GM23248 (cell line): ENCODE measurements at regions of chr18 and their contacts with region 1.

Region 1: DNA sequence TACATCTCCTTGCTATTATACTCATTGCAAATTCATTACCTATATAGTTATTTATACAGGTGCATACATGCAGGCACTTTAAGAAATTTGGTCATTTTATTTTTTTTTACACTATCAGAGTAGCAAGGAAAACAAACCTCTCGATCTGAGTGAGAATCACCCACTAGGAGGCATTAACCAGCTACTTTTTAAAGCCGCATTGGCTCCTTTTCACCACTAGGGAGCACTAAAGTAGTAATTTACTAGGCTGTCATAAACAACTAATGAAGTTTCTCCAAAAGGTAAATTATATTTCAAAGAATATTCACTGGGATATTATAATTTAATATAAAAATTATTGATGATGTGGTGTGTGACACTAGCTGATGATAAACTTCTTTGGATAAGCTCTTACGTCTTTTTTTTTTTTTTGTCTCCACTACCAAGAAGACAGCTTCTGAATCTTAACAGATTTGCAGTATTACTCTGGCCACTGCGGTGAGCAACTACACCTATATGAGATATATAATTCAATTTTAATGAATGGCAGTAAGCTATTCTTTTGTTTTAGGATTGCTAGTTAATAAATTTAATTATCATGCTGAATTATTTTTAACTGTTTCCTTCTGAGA is 101.9 kb downstream of the NOL4 start:
- DNase-seq: peak; percentile 76
- H3K4me3 ChIP-seq: no peak overlapping the region
- H3K27ac ChIP-seq: no peak overlapping the region
- H3K4me1 ChIP-seq: no peaks in the 10 kb centered on the region
- H3K27me3 ChIP-seq: no peaks in the 10 kb centered on the region

Region 2: DNA sequence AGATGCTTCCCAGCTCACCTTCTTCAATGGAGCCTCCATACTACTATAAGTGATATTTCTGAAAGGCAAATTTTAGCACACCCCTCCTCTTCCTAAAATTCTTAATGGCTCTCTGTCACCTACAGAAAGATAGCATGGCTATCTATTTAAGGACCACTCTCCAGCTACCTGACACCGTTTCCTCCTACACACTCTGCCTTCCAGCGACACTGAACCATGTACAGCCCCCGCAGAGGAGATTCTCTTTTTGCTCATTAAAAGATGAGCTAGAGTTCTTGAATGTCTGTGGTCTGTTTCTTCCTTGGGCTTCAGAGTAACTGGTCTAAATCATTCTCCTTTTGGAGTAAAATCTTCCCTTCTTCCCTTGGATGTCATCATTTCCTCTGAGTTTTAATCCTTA is 1613.7 kb before region 1 on chr18:
- in situ Hi-C with region 1: no loop called
- DNase-seq: no peak
- H3K4me3 ChIP-seq: no peak overlapping the region
- H3K27ac ChIP-seq: no peak overlapping the region
- H3K4me1 ChIP-seq: no peaks in the 10 kb centered on the region
- H3K27me3 ChIP-seq: no peaks in the 10 kb centered on the region

Region 3: DNA sequence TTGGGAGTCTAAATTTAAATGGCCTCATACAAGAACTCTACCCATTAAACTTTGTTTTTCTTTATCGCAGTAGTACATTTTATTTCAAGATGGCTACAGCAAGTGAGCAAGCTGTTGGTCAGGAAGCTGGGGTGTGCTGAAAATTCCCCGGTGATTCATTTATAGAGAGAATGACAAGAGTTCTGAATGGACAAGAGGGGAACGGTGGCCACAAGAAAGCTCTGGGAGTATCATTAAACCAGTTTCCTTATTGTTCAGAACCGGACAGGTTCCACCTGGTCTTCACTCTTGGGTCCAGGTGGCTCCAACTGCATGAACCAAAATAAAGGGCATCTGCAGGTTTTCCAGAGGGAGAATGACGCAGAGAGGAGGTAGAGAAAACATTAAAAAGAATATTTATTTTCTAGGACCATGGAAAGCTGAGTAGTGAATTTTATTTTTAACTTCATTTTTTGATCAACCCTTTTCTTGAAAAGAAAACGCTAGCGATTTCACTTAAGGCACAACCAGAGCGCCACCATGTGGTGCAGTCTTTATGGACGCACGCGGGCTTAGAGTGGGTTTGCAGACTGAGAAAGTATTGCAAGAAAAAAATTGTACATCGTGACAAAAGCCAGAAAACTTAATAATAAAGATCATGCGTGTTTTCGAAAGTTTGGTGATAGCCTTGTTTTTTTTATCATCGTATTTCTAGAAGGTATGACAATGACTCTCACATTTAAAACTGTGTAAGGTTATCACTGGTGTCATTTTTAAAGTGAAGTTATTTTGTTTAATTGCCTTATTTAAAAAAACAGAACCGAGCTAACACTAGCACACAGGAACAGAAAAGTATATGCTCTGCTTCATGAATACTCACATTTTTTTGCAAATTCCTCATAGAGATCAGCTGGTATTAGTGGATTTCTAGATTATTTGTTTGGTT is 199.8 kb after region 1 on chr18:
- in situ Hi-C with region 1: loop called (anchors 10 kb)
- DNase-seq: peak; percentile 81
- H3K4me3 ChIP-seq: no peak overlapping the region
- H3K27ac ChIP-seq: no peak overlapping the region
- H3K4me1 ChIP-seq: no peaks in the 10 kb centered on the region
- H3K27me3 ChIP-seq: no peaks in the 10 kb centered on the region

Region 4: GRCh38 chr18:34767601-34768027 is 644.8 kb after region 1 on chr18:
- in situ Hi-C with region 1: no loop called
- DNase-seq: peak; percentile 94
- H3K4me3 ChIP-seq: no peak overlapping the region
- H3K27ac ChIP-seq: peak overlapping the region; percentile 95
- H3K4me1 ChIP-seq: peaks cover 40% of the 10 kb centered on the region
- H3K27me3 ChIP-seq: no peaks in the 10 kb centered on the region

Region 5: DNA sequence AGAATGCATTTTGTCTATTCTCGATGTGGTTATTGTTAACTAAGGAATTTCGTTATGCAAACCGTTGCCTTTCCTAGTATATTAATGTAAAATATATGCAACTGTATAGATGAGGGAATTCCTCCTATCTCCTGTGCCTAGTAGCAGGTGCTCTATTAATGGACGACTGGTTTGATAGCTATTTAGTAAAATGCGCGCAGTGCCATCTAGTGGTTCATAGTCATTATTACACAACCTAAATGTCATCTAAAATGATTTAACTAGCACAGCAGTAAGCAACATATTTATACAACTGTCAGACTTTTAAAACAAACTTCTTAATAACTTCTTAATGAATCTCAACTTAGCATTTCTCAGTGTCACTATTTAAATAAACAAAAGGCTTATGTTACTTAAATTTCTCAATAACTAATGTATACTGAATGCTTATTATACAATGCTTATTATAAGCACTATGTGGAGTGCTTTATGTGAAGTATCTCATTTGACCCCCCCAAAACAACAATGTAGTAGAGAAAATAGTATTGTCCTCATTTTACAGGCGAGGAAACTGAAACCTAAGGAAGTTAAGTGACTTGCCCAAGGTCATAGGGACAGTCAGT is 665.2 kb after region 1 on chr18:
- in situ Hi-C with region 1: loop called (anchors 25 kb)
- DNase-seq: peak; percentile 66
- H3K4me3 ChIP-seq: no peak overlapping the region
- H3K27ac ChIP-seq: no peak overlapping the region
- H3K4me1 ChIP-seq: peaks cover 23% of the 10 kb centered on the region
- H3K27me3 ChIP-seq: no peaks in the 10 kb centered on the region